ENCODE measurements at regions of chr4 and their contacts with region 1.

Region 1: GRCh38 chr4:4260253-4260652 is 12.2 kb upstream of the TMEM128 start:
- H3K4me3 ChIP-seq: no peak overlapping the region
- H3K27ac ChIP-seq: no peak overlapping the region
- H3K4me1 ChIP-seq: no peaks in the 10 kb centered on the region
- CTCF ChIP-seq: peak; percentile 69

Region 2: GRCh38 chr4:3898098-3898497 is 362.2 kb before region 1 on chr4:
- CTCF ChIA-PET with region 1: no interaction called
- POLR2A ChIA-PET with region 1: no interaction called
- H3K4me3 ChIP-seq: no peak overlapping the region
- H3K27ac ChIP-seq: no peak overlapping the region
- H3K4me1 ChIP-seq: no peaks in the 10 kb centered on the region
- CTCF ChIP-seq: no peak

Region 3: DNA sequence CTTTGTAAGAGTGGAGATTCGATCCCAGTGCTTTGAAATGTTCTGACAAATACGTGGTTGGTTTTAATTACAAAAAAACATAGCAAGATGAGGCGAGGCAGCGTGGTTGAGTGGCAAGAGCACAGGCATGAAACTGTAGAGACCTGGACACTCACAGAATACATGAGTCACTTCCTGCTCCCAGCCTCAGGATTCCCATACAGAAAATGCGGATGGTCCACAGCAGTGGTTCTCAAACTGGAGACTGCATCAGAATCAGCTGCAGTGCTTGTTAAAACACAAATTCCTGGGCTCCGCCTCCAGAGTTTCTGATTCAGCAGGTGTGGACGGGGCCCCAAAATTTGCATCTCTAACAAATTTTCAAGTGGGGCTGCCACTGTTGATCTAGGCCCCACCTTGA is 43.6 kb before region 1 on chr4:
- CTCF ChIA-PET with region 1: no interaction called
- POLR2A ChIA-PET with region 1: no interaction called
- H3K4me3 ChIP-seq: no peak overlapping the region
- H3K27ac ChIP-seq: no peak overlapping the region
- H3K4me1 ChIP-seq: no peaks in the 10 kb centered on the region
- CTCF ChIP-seq: no peak

Region 4: GRCh38 chr4:4334798-4335520 is 74.7 kb after region 1 on chr4:
- CTCF ChIA-PET with region 1: interaction called, 18 read pairs
- POLR2A ChIA-PET with region 1: no interaction called
- H3K4me3 ChIP-seq: no peak overlapping the region
- H3K27ac ChIP-seq: no peak overlapping the region
- H3K4me1 ChIP-seq: no peaks in the 10 kb centered on the region
- CTCF ChIP-seq: peak; percentile 63

Region 5: DNA sequence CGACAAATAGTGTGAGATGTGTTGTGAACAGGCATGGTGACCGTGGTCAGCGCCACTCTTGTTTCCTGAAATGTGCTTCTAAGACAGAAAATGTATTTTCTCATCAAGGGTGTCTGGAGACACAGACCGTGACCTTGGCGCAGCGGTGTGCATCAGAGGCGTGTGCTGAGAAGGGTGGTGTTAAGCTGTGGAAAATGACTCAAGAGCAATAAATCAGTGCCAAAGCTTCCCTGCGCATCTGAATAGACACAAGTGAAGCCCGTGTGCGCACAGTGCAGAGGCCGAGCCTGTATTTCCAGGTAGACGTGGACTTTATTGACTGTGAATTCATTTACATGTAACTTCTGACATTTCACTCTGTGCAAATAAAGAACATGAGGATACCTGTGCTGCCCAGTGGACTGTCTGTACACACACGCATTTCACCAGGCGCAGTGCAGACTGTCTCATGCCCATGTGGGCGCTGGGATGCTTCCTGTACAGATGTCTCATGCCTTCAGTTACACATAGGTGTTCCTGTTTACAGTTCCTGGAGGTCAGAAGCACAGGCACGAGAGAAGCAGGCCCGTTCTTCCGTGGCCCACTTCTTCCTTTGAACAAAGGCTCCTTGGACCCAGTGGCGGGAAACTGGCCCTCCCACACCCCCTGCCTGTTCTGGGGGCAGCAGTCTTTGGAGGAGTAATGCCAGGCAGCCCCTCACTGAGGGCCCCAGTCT is 158.6 kb after region 1 on chr4:
- CTCF ChIA-PET with region 1: no interaction called
- POLR2A ChIA-PET with region 1: no interaction called
- H3K4me3 ChIP-seq: no peak overlapping the region
- H3K27ac ChIP-seq: no peak overlapping the region
- H3K4me1 ChIP-seq: no peaks in the 10 kb centered on the region
- CTCF ChIP-seq: no peak